MCF 10A (cell line): ENCODE measurements at regions of chr13 and their contacts with region 1.

Region 1: DNA sequence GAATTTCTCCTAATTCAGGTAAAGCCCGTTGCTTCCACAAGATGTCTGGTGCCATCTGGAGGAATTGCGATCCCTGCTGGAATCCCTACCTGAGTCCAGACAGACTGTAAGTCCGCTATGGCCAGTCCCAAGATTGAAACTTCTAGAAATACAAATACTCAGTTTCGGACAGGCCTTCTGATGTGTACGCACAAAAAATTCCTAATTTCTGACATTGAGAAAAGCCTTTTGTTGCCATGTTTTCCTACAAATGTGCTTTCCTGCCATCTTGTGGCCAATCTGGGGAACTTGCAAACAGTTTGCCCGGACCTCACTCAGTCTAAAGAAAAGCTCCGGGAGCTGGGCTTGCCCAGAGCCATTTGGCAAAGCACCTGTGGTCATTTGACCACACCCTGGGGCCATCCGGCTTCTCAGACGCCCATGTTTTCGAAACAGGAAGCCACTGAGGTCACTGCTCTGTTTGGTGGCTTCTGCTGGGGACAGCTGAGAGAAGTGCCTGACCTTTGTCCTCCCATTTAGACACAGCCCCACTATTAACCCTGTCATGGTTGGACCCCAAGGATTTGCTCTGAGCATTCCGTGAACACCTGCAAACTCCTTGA is 79.4 kb downstream of the SLC15A1 start:
- DNase-seq: peak; percentile 73
- H3K4me3 Mint-ChIP-seq: no peak overlapping the region
- H3K27ac Mint-ChIP-seq: no peak overlapping the region
- H3K4me1 Mint-ChIP-seq: no peaks in the 10 kb centered on the region
- H3K27me3 Mint-ChIP-seq: peaks cover 18% of the 10 kb centered on the region
- CTCF ChIP-seq: peak; percentile 89

Region 2: DNA sequence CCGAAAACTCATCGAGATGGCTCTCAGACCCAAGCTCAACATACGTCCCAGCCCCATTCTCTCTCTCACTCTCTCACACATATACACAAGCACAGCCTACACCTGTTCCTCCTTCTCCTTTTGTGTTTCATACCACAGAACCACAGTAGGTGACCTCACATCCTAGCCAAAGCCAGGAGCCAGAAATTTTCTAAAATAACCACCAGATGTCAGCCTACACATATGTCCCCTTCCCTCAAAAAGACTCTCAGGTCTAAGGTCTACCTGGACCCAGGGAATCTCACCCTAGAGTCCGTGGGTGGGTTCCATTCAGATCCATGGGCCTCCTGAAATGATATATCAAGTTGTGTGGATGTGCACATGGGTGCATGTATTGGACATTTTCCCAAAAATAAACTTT is 823.7 kb before region 1 on chr13:
- CTCF ChIA-PET with region 1: interaction called, 5 read pairs
- POLR2A ChIA-PET with region 1: no interaction called
- intact Hi-C with region 1: loop called (anchors 1 kb)
- DNase-seq: peak; percentile 45
- H3K4me3 Mint-ChIP-seq: no peak overlapping the region
- H3K27ac Mint-ChIP-seq: no peak overlapping the region
- H3K4me1 Mint-ChIP-seq: peaks cover 14% of the 10 kb centered on the region
- H3K27me3 Mint-ChIP-seq: peaks cover 4% of the 10 kb centered on the region
- CTCF ChIP-seq: peak; percentile 50

Region 3: DNA sequence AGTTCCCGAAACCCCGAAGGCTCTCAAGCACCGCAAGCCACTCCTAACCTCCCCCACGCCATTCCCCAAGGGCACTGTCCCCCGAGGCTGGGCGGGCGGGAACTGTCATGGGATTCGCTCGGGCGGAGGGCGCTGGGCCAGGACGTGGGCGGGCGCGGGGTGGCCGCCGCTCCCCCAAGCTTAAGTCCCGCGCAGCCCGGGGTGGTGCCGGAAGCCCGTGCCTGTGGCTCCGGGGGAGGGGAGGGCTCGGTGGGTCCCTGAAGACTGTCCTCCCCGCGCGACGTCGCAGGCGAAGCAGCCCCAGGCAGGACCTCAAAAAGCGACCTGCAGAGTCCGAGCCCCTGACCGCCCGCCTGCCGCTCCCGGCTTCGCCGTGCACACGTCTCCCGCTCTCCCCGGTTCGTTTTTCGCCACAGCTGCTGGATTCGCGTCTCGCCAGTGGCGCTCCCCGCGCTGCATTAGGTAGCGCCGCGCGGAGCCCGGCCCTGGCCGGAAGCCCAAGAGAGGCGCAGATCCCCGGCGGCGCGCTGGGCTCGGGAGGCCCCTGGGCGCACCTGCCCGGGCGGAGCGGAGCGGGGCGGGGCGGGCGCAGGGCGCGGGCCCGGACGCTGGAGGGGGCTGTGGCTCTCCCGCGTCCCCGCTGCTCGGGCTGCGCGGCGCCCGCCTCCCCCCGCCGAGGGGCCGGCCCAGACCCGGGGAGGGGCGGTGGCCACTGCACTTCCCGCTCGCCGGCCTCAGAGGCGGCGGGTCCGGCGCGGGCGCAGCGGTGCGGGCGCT is 530.5 kb before region 1 on chr13 and contains the start of gene FARP1:
- CTCF ChIA-PET with region 1: no interaction called
- POLR2A ChIA-PET with region 1: no interaction called
- intact Hi-C with region 1: loop called (anchors 1 kb)
- DNase-seq: peak; percentile 70
- H3K4me3 Mint-ChIP-seq: peak within 1 kb of the TSS; percentile 76
- H3K27ac Mint-ChIP-seq: peak within 1 kb of the TSS; percentile 46
- H3K4me1 Mint-ChIP-seq: peaks cover 16% of the 10 kb centered on the region
- H3K27me3 Mint-ChIP-seq: peaks cover 12% of the 10 kb centered on the region
- CTCF ChIP-seq: peak; percentile 30
- total RNA-seq, gene FARP1: 20.7 and 30.1 TPM in 2 replicates

Region 4: GRCh38 chr13:98445340-98446233 is 227.5 kb before region 1 on chr13:
- CTCF ChIA-PET with region 1: interaction called, 50 read pairs
- POLR2A ChIA-PET with region 1: no interaction called
- intact Hi-C with region 1: loop called (anchors 1 kb)
- DNase-seq: peak; percentile 75
- H3K4me3 Mint-ChIP-seq: no peak overlapping the region
- H3K27ac Mint-ChIP-seq: no peak overlapping the region
- H3K4me1 Mint-ChIP-seq: peaks cover 19% of the 10 kb centered on the region
- H3K27me3 Mint-ChIP-seq: no peaks in the 10 kb centered on the region
- CTCF ChIP-seq: peak; percentile 97

Region 5: GRCh38 chr13:98653463-98653985 is 19.5 kb before region 1 on chr13:
- CTCF ChIA-PET with region 1: interaction called, 18 read pairs
- POLR2A ChIA-PET with region 1: no interaction called
- intact Hi-C with region 1: no loop called
- DNase-seq: peak; percentile 85
- H3K4me3 Mint-ChIP-seq: no peak overlapping the region
- H3K27ac Mint-ChIP-seq: no peak overlapping the region
- H3K4me1 Mint-ChIP-seq: peaks cover 5% of the 10 kb centered on the region
- H3K27me3 Mint-ChIP-seq: peaks cover 11% of the 10 kb centered on the region
- CTCF ChIP-seq: peak; percentile 71

Region 6: GRCh38 chr13:98842864-98843481 is 169.9 kb after region 1 on chr13:
- CTCF ChIA-PET with region 1: interaction called, 5 read pairs
- POLR2A ChIA-PET with region 1: no interaction called
- intact Hi-C with region 1: loop called (anchors 2 kb)
- DNase-seq: peak; percentile 67
- H3K4me3 Mint-ChIP-seq: no peak overlapping the region
- H3K27ac Mint-ChIP-seq: no peak overlapping the region
- H3K4me1 Mint-ChIP-seq: no peaks in the 10 kb centered on the region
- H3K27me3 Mint-ChIP-seq: no peaks in the 10 kb centered on the region
- CTCF ChIP-seq: peak; percentile 83